GM12878 (cell line): ENCODE measurements at regions of chr9 and their contacts with region 1.

Region 1: DNA sequence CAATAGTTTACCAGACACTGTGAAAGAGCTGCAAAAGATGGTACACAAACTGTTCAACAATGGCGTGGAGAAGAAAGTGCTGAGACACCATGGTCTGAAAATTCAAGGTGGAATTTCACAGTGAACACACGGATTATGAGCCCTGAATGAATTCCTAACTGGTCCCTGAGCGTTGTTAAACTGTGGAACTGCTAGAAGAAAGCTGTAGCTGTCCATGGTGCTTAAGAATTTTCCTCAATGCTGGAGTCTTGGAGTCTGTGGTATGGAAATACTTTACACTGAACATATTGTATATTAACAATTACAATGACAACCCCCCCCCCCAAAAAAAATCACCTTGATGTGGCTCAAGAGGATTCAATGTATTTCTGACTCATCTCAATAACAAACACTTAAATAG is 68.5 kb downstream of the SLC24A2 start:
- DNase-seq: no peak
- ATAC-seq: no peak
- H3K4me3 ChIP-seq: no peak overlapping the region
- H3K27ac ChIP-seq: no peak overlapping the region
- H3K4me1 ChIP-seq: no peaks in the 10 kb centered on the region
- H3K27me3 ChIP-seq: no peaks in the 10 kb centered on the region
- CTCF ChIP-seq: no peak
- EP300 ChIP-seq: no peak
- POLR2A ChIP-seq: no peak
- RAD21 ChIP-seq: no peak

Region 2: DNA sequence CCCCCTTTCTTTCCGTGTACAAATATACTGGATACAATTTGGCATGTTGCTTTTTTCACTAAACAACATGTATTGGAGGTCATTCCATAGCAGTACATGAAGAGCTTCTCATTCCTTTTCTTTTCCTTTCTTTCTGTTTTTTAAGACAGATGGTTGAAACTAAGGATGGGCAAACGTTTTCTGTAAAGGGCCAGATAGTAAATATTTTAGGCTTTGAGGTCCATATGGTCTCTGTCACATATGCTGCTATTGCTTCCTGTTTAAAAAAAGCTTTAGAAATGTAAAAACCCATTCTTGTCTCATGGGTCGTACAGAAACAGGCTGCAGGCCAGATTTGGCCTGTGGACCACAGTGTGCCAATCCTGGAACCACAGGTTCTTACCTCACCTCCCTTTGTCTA is 151.4 kb before region 1 on chr9:
- CTCF ChIA-PET with region 1: no interaction called
- POLR2A ChIA-PET with region 1: no interaction called
- RAD21 ChIA-PET with region 1: no interaction called
- SMC1A ChIA-PET with region 1: no interaction called
- in situ Hi-C with region 1: no loop called
- intact Hi-C with region 1: no loop called
- DNase-seq: no peak
- ATAC-seq: no peak
- H3K4me3 ChIP-seq: no peak overlapping the region
- H3K27ac ChIP-seq: no peak overlapping the region
- H3K4me1 ChIP-seq: no peaks in the 10 kb centered on the region
- H3K27me3 ChIP-seq: no peaks in the 10 kb centered on the region
- CTCF ChIP-seq: no peak
- EP300 ChIP-seq: no peak
- POLR2A ChIP-seq: no peak
- RAD21 ChIP-seq: no peak

Region 3: GRCh38 chr9:19799784-19800183 is 79.4 kb after region 1 on chr9:
- CTCF ChIA-PET with region 1: no interaction called
- POLR2A ChIA-PET with region 1: no interaction called
- RAD21 ChIA-PET with region 1: no interaction called
- SMC1A ChIA-PET with region 1: no interaction called
- in situ Hi-C with region 1: no loop called
- intact Hi-C with region 1: loop called (anchors 10 kb)
- DNase-seq: no peak
- ATAC-seq: no peak
- H3K4me3 ChIP-seq: no peak overlapping the region
- H3K27ac ChIP-seq: no peak overlapping the region
- H3K4me1 ChIP-seq: no peaks in the 10 kb centered on the region
- H3K27me3 ChIP-seq: no peaks in the 10 kb centered on the region
- CTCF ChIP-seq: no peak
- EP300 ChIP-seq: no peak
- POLR2A ChIP-seq: no peak
- RAD21 ChIP-seq: no peak

Region 4: DNA sequence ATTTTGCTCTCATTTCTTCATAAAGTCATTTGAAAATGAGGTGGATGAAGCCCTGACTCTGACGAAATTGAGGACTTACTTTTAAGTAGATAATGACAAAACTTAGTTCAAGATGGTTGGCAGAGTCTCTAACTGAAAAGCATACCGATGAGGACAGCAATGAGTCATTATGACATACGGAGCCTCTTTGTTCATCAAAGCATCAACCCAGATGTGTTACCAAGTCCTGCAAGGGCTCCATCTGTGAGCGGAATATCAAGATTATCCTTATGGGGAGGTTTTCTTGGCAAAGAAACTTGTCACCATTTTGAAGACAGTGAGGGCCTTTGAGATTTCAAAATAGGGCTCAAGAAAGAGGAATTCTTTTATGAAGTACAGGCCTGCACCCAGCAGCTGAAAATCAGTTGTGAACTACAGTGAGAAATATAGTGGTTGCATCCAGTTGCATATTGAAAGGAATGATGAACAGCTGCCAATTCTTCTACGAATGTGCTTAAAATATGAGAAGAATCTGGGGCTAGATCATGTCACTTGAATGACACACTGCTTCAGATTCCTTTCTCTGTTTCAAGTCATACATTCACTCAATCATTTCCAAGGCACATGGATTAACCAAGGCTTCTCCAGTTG is 155.0 kb after region 1 on chr9:
- CTCF ChIA-PET with region 1: no interaction called
- POLR2A ChIA-PET with region 1: no interaction called
- RAD21 ChIA-PET with region 1: no interaction called
- SMC1A ChIA-PET with region 1: no interaction called
- in situ Hi-C with region 1: no loop called
- intact Hi-C with region 1: loop called (anchors 10 kb)
- DNase-seq: no peak
- ATAC-seq: no peak
- H3K4me3 ChIP-seq: no peak overlapping the region
- H3K27ac ChIP-seq: no peak overlapping the region
- H3K4me1 ChIP-seq: no peaks in the 10 kb centered on the region
- H3K27me3 ChIP-seq: no peaks in the 10 kb centered on the region
- CTCF ChIP-seq: no peak
- EP300 ChIP-seq: no peak
- POLR2A ChIP-seq: no peak
- RAD21 ChIP-seq: no peak